Activated CD4-positive, alpha-beta memory T cell treated with anti-CD3 and anti-CD28 coated beads, Interleukin-2, amount 10 ng/mL, durations not matched to agents 7 days and 5 days (primary cell): ENCODE measurements at regions of chr4 and their contacts with region 1.

Region 1: GRCh38 chr4:75724066-75724866 is at the start of gene USO1:
- DNase-seq: peak; percentile 100
- H3K4me3 Mint-ChIP-seq: peak within 1 kb of the TSS; percentile 100
- H3K27ac Mint-ChIP-seq: peak within 1 kb of the TSS; percentile 99
- H3K4me1 Mint-ChIP-seq: peaks cover 56% of the 10 kb centered on the region
- H3K27me3 Mint-ChIP-seq: no peaks in the 10 kb centered on the region
- total RNA-seq, gene USO1: 43.4 to 45.9 TPM

Region 2: GRCh38 chr4:75514131-75514948 is 209.9 kb before region 1 on chr4 and contains the starts of genes RCHY1 and THAP6:
- CTCF ChIA-PET with region 1: interaction called, 8 read pairs
- POLR2A ChIA-PET with region 1: interaction called, 75 read pairs
- DNase-seq: peak; percentile 94
- H3K4me3 Mint-ChIP-seq: no peak within 1 kb of the TSS
- H3K27ac Mint-ChIP-seq: no peak within 1 kb of the TSS
- H3K4me1 Mint-ChIP-seq: peaks cover 46% of the 10 kb centered on the region
- H3K27me3 Mint-ChIP-seq: no peaks in the 10 kb centered on the region
- total RNA-seq, gene RCHY1: 35.6 to 35.7 TPM
- total RNA-seq, gene THAP6: 25.3 to 26.6 TPM

Region 3: DNA sequence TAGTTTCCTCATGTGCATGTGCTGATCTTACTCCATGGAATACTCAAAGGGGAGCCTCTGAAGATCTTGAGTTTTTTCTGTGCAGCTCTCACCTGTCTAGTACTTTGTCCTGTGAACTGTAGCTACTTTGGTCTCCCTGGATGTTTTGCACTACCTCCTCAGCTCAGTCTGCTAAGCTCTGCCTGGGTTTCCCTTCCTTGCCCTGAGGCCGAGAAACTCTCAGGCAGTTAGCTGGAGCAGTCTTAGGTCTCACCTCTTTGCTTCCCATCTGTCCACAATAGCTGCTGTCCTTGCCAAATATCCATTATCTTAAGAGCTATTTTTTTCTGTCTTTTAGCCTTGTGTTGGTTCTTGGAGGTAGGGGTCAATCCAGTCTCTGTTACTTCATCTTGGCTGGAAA is 198.4 kb before region 1 on chr4:
- CTCF ChIA-PET with region 1: no interaction called
- POLR2A ChIA-PET with region 1: no interaction called
- DNase-seq: no peak
- H3K4me3 Mint-ChIP-seq: no peak overlapping the region
- H3K27ac Mint-ChIP-seq: no peak overlapping the region
- H3K4me1 Mint-ChIP-seq: peaks cover 11% of the 10 kb centered on the region
- H3K27me3 Mint-ChIP-seq: no peaks in the 10 kb centered on the region

Region 4: GRCh38 chr4:75564023-75564422 is 160.2 kb before region 1 on chr4:
- CTCF ChIA-PET with region 1: no interaction called
- POLR2A ChIA-PET with region 1: no interaction called
- DNase-seq: no peak
- H3K4me3 Mint-ChIP-seq: no peak overlapping the region
- H3K27ac Mint-ChIP-seq: no peak overlapping the region
- H3K4me1 Mint-ChIP-seq: peaks cover 20% of the 10 kb centered on the region
- H3K27me3 Mint-ChIP-seq: peaks cover 20% of the 10 kb centered on the region

Region 5: GRCh38 chr4:75644095-75644494 is 80.2 kb before region 1 on chr4:
- CTCF ChIA-PET with region 1: interaction called, 6 read pairs
- POLR2A ChIA-PET with region 1: interaction called, 12 read pairs
- DNase-seq: no peak
- H3K4me3 Mint-ChIP-seq: no peak overlapping the region
- H3K27ac Mint-ChIP-seq: no peak overlapping the region
- H3K4me1 Mint-ChIP-seq: peaks cover 15% of the 10 kb centered on the region
- H3K27me3 Mint-ChIP-seq: no peaks in the 10 kb centered on the region

Region 6: GRCh38 chr4:75673027-75673958 is 51.0 kb before region 1 on chr4 and contains the start of gene G3BP2:
- CTCF ChIA-PET with region 1: interaction called, 51 read pairs
- POLR2A ChIA-PET with region 1: interaction called, 147 read pairs
- DNase-seq: peak; percentile 98
- H3K4me3 Mint-ChIP-seq: peak within 1 kb of the TSS; percentile 97
- H3K27ac Mint-ChIP-seq: peak within 1 kb of the TSS; percentile 99
- H3K4me1 Mint-ChIP-seq: peaks cover 48% of the 10 kb centered on the region
- H3K27me3 Mint-ChIP-seq: no peaks in the 10 kb centered on the region
- total RNA-seq, gene G3BP2: 185 to 187 TPM

Region 7: DNA sequence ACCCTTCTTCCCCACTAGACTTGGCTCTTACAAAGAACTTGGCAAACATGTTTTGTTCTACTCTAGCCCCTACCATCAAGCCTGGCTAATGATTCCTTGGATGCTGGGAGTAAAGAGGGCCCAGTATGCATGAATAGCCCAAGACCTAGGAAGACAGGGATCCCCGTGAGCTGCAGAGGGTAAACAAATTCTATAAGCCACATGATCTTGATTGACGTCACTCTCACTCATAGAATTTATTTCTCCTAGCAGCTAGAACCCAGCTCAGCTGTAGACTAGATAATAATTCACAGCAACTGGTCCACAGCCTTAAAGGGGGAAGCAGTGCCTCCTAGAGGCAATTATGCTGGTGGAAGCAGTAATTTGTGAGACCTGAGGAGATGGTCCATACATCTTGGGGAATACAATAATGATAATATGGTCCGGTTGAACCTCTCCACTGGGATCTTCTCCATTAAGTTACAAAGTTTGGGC is 16.0 kb before region 1 on chr4:
- CTCF ChIA-PET with region 1: interaction called, 34 read pairs
- POLR2A ChIA-PET with region 1: interaction called, 8 read pairs
- DNase-seq: peak; percentile 52
- H3K4me3 Mint-ChIP-seq: no peak overlapping the region
- H3K27ac Mint-ChIP-seq: no peak overlapping the region
- H3K4me1 Mint-ChIP-seq: peaks cover 11% of the 10 kb centered on the region
- H3K27me3 Mint-ChIP-seq: no peaks in the 10 kb centered on the region

Region 8: DNA sequence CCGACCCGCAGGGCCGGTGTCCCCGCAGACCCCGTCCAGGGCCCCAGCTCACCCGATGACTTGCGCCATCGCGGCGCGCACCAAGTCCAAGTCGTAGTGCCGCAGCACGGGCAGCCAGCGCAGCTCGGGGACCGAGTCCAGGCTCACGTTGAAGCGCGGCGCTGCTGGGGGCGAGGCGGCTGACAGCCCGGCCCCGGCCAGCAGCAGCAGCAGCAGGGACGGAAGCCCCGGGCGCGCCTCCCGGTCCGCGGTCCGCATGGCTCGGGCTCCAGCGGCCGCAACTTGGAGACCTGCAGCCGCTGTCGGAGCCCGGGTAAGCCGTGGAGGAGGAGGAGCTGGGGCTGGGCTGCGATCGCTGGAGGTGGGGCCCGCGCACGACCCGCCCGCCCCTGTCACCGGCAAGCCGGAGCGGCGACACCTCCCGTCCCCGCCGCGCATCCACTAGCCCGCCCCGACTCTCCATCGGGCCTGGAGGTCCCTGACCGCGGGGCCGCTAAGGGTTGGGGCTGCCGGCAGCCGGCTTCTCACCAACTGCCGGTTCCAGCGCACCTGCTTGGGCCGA is 216.5 kb after region 1 on chr4 and contains the start of gene NAAA:
- CTCF ChIA-PET with region 1: no interaction called
- POLR2A ChIA-PET with region 1: interaction called, 16 read pairs
- DNase-seq: peak; percentile 88
- H3K4me3 Mint-ChIP-seq: peak within 1 kb of the TSS; percentile 99
- H3K27ac Mint-ChIP-seq: peak within 1 kb of the TSS; percentile 94
- H3K4me1 Mint-ChIP-seq: peaks cover 32% of the 10 kb centered on the region
- H3K27me3 Mint-ChIP-seq: no peaks in the 10 kb centered on the region
- total RNA-seq, gene NAAA: 38.7 to 39.3 TPM